ENCODE measurements at regions of chr12 and their contacts with region 1.

Region 1: GRCh38 chr12:123983822-123984485 is 10.9 kb downstream of the ZNF664 start:
- DNase-seq: peak; percentile 21 to 83 (median 39)
- ATAC-seq: peak; percentile 86
- H3K4me3 ChIP-seq: no peak overlapping the region
- H3K4me3 Mint-ChIP-seq: no peak overlapping the region
- H3K27ac ChIP-seq: no peak overlapping the region
- H3K27ac Mint-ChIP-seq: no peak overlapping the region
- H3K4me1 ChIP-seq: no peaks in the 10 kb centered on the region
- H3K4me1 Mint-ChIP-seq: peaks cover 5% of the 10 kb centered on the region
- H3K27me3 ChIP-seq: no peaks in the 10 kb centered on the region
- H3K27me3 Mint-ChIP-seq: no peaks in the 10 kb centered on the region
- CTCF ChIP-seq: peak; percentile 84

Region 2: GRCh38 chr12:123744836-123745235 is 239.1 kb before region 1 on chr12:
- CTCF ChIA-PET with region 1: no interaction called
- POLR2A ChIA-PET with region 1: no interaction called
- intact Hi-C with region 1: loop called in 1 of 2 experiments (anchors 10 kb)
- DNase-seq: no peak
- ATAC-seq: no peak
- H3K4me3 ChIP-seq: no peak overlapping the region
- H3K4me3 Mint-ChIP-seq: no peak overlapping the region
- H3K27ac ChIP-seq: no peak overlapping the region
- H3K27ac Mint-ChIP-seq: peak overlapping the region; percentile 36
- H3K4me1 ChIP-seq: peaks cover 7% of the 10 kb centered on the region
- H3K4me1 Mint-ChIP-seq: peaks cover 32% of the 10 kb centered on the region
- H3K27me3 ChIP-seq: no peaks in the 10 kb centered on the region
- H3K27me3 Mint-ChIP-seq: no peaks in the 10 kb centered on the region
- CTCF ChIP-seq: no peak

Region 3: GRCh38 chr12:123801573-123802178 is 182.3 kb before region 1 on chr12:
- CTCF ChIA-PET with region 1: no interaction called
- POLR2A ChIA-PET with region 1: no interaction called
- intact Hi-C with region 1: loop called (anchors 1 to 2 kb)
- DNase-seq: peak in 2 of 14 experiments; percentile 1 to 7
- ATAC-seq: no peak
- H3K4me3 ChIP-seq: no peak overlapping the region
- H3K4me3 Mint-ChIP-seq: no peak overlapping the region
- H3K27ac ChIP-seq: no peak overlapping the region
- H3K27ac Mint-ChIP-seq: no peak overlapping the region
- H3K4me1 ChIP-seq: no peaks in the 10 kb centered on the region
- H3K4me1 Mint-ChIP-seq: no peaks in the 10 kb centered on the region
- H3K27me3 ChIP-seq: no peaks in the 10 kb centered on the region
- H3K27me3 Mint-ChIP-seq: no peaks in the 10 kb centered on the region
- CTCF ChIP-seq: no peak

Region 4: DNA sequence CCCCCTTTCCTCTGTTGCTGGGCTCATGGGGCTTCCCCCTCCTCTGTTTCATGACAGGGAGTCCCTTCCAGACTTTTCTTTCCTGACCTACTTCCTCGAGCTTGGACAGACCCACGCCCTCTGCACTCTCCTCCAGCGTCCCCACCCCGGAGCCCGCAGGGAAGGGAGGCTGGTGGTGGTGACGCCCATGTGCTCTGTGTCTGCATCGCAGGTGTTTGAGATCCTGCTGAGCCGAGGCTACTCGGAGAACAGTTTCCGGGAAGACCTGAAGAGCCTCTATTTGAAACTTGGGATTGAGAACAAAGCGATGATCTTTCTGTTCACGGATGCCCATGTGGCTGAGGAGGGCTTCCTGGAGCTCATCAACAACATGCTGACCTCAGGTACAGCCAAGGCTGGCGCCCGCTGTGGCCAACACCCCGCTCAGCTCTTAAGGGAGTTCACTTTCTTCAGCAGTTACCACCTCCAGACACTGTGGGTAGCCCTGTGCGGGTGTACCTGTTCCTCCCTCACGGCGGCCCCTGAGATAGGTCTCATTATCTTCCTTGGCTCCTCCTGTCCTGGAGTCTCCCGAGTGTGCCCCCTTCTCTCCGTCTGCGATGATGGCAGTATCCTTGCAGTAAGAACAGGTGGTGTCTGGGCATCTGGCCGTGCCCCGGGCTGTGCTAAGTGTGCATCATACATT is 96.9 kb before region 1 on chr12:
- CTCF ChIA-PET with region 1: no interaction called
- POLR2A ChIA-PET with region 1: no interaction called
- intact Hi-C with region 1: no loop called
- DNase-seq: no peak
- ATAC-seq: no peak
- H3K4me3 ChIP-seq: no peak overlapping the region
- H3K4me3 Mint-ChIP-seq: no peak overlapping the region
- H3K27ac ChIP-seq: no peak overlapping the region
- H3K27ac Mint-ChIP-seq: no peak overlapping the region
- H3K4me1 ChIP-seq: no peaks in the 10 kb centered on the region
- H3K4me1 Mint-ChIP-seq: no peaks in the 10 kb centered on the region
- H3K27me3 ChIP-seq: peaks cover 0 to 6% of the 10 kb centered on the region in 2 experiments
- H3K27me3 Mint-ChIP-seq: peaks cover 4% of the 10 kb centered on the region
- CTCF ChIP-seq: no peak

Region 5: DNA sequence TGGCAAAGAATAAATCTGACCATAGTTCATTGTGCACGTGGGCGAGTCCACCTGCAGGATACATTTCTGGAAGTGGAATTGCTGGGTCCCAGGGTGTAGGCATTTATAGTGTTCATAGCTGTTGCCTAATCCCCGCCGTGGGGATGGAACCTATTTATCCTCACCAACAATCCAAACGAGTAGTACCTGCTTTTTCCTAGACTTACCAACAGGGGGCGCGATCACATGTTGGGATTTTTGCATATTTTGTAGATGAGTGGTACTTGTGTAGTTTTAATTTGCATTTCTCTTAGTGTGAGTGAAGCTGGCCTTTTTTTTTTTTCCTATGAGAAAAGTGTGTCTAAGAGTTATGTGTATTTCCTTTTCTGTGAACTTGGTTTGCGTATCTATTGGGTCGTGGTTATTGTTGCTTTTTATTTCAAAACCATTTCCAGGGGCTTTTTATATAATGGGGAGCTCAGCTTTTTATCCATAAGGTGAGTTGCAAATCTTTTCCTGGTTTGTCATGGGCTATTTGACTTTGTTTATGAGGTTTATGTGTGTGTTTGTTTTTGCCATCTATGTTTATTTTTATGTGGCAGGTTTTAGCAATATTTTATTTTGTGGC is 78.5 kb before region 1 on chr12:
- CTCF ChIA-PET with region 1: interaction called, 34 read pairs
- POLR2A ChIA-PET with region 1: interaction called, 4 read pairs
- intact Hi-C with region 1: loop called (anchors 1 kb)
- DNase-seq: peak; percentile 42 to 86 (median 60)
- ATAC-seq: peak; percentile 73
- H3K4me3 ChIP-seq: no peak overlapping the region
- H3K4me3 Mint-ChIP-seq: no peak overlapping the region
- H3K27ac ChIP-seq: no peak overlapping the region
- H3K27ac Mint-ChIP-seq: no peak overlapping the region
- H3K4me1 ChIP-seq: peaks cover 4% of the 10 kb centered on the region
- H3K4me1 Mint-ChIP-seq: peaks cover 12% of the 10 kb centered on the region
- H3K27me3 ChIP-seq: no peaks in the 10 kb centered on the region
- H3K27me3 Mint-ChIP-seq: no peaks in the 10 kb centered on the region
- CTCF ChIP-seq: peak; percentile 90

Region 6: GRCh38 chr12:123995023-123995748 is 11.2 kb after region 1 on chr12:
- CTCF ChIA-PET with region 1: no interaction called
- POLR2A ChIA-PET with region 1: no interaction called
- intact Hi-C with region 1: no loop called
- DNase-seq: no peak
- ATAC-seq: no peak
- H3K4me3 ChIP-seq: no peak overlapping the region
- H3K4me3 Mint-ChIP-seq: no peak overlapping the region
- H3K27ac ChIP-seq: no peak overlapping the region
- H3K27ac Mint-ChIP-seq: no peak overlapping the region
- H3K4me1 ChIP-seq: peaks cover 7% of the 10 kb centered on the region
- H3K4me1 Mint-ChIP-seq: peaks cover 54% of the 10 kb centered on the region
- H3K27me3 ChIP-seq: no peaks in the 10 kb centered on the region
- H3K27me3 Mint-ChIP-seq: no peaks in the 10 kb centered on the region
- CTCF ChIP-seq: no peak

Measured in CD4-positive, alpha-beta T cell (primary cell).